ENCODE measurements at regions of chr1 and their contacts with region 1.

Region 1: GRCh38 chr1:203273206-203273868 is 32.0 kb upstream of the BTG2 start:
- DNase-seq: peak; percentile 95
- ATAC-seq: peak; percentile 78
- H3K4me3 ChIP-seq: peak overlapping the region; percentile 45 to 83 (median 61)
- H3K4me3 Mint-ChIP-seq: peak overlapping the region; percentile 86
- H3K27ac ChIP-seq: peak overlapping the region; percentile 62 to 84
- H3K27ac Mint-ChIP-seq: peak overlapping the region; percentile 86
- H3K4me1 ChIP-seq: peaks cover 72 to 77% of the 10 kb centered on the region in 2 donors
- H3K4me1 Mint-ChIP-seq: peaks cover 67% of the 10 kb centered on the region
- H3K27me3 ChIP-seq: no peaks in the 10 kb centered on the region
- H3K27me3 Mint-ChIP-seq: no peaks in the 10 kb centered on the region
- CTCF ChIP-seq: peak; percentile 99

Region 2: GRCh38 chr1:203299169-203299568 is 25.8 kb after region 1 on chr1:
- CTCF ChIA-PET with region 1: interaction called, 159 read pairs
- POLR2A ChIA-PET with region 1: interaction called, 12 read pairs
- intact Hi-C with region 1: no loop called
- DNase-seq: peak; percentile 79
- ATAC-seq: peak; percentile 70
- H3K4me3 ChIP-seq: peak overlapping the region in 3 of 5 experiments; percentile 4 to 26 (median 5)
- H3K4me3 Mint-ChIP-seq: peak overlapping the region; percentile 68
- H3K27ac ChIP-seq: peak overlapping the region; percentile 76 to 87
- H3K27ac Mint-ChIP-seq: peak overlapping the region; percentile 93
- H3K4me1 ChIP-seq: peaks cover 87 to 100% of the 10 kb centered on the region in 2 donors
- H3K4me1 Mint-ChIP-seq: peaks cover 91% of the 10 kb centered on the region
- H3K27me3 ChIP-seq: no peaks in the 10 kb centered on the region
- H3K27me3 Mint-ChIP-seq: no peaks in the 10 kb centered on the region
- CTCF ChIP-seq: no peak

Region 3: DNA sequence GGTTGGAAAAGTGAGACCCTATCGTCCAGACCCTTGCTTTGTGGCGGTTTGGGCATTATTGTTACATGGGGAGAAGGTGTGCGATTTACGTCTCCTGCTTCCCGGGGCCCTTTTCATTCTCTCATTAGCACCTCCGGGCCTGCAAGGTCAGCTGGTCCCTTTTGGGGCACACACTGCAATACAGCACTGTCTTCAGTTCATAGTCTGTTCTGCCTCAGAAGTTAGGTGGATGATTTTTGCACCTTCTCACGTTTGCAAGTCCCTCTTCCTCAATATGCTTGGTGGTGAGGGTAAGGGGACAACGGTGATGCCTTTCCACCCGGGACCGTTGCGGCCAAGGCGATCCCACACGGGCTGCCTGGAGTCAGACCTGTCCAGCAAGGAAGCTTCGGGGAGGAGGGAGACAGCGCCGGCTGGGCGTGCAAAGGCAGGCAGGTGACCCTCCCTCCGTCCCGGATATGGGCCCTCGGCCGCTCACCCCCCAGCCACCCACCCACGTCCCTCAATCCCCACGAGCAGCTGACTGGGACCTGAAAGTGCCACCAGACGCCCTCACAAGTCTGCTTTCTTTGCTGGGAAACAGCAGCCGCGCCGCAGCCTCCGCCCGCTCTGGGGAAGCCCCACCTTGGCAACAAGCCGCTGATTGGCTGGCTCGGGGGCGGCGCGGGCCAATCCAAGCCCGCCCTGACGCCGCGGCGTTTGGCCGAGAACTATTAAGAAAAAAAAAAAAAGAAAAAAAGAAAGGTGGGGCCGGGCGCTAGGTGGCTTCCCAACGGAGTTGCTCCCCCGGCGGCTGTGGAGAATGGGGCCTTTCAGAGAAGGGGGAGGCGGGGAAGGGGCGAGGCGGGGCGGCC is 53.7 kb after region 1 on chr1:
- CTCF ChIA-PET with region 1: interaction called, 1,776 read pairs
- POLR2A ChIA-PET with region 1: interaction called, 178 read pairs
- intact Hi-C with region 1: loop called (anchors 1 kb)
- DNase-seq: peak; percentile 95
- ATAC-seq: peak; percentile 67
- H3K4me3 ChIP-seq: peak overlapping the region; percentile 35 to 77 (median 56)
- H3K4me3 Mint-ChIP-seq: peak overlapping the region; percentile 88
- H3K27ac ChIP-seq: peak overlapping the region; percentile 96 to 97
- H3K27ac Mint-ChIP-seq: peak overlapping the region; percentile 98
- H3K4me1 ChIP-seq: peaks cover 56 to 62% of the 10 kb centered on the region in 2 donors
- H3K4me1 Mint-ChIP-seq: peaks cover 71% of the 10 kb centered on the region
- H3K27me3 ChIP-seq: no peaks in the 10 kb centered on the region
- H3K27me3 Mint-ChIP-seq: no peaks in the 10 kb centered on the region
- CTCF ChIP-seq: no peak

Region 4: DNA sequence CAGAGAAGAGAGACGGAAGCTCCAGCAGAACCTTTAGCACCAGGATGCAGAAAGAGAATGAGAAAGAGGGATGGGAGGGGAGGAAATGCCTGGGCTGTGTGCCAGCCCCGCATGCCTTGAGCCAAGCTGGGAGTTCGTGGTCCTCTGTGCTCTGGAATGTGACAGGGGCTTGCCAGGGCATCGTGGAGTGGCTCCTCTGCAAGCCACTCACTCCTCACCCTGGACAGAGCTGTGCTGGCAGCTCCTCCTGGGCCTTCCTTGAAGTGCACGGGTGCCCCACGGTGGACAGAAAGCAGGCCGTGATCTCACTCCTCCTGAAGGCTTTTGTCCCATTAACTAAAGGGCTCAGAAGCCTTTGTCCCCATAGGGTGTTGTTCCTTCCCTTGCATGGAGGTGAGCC is 167.4 kb after region 1 on chr1:
- CTCF ChIA-PET with region 1: interaction called, 98 read pairs
- POLR2A ChIA-PET with region 1: no interaction called
- intact Hi-C with region 1: loop called (anchors 2 kb)
- DNase-seq: peak; percentile 38
- ATAC-seq: peak; percentile 39
- H3K4me3 ChIP-seq: no peak overlapping the region
- H3K4me3 Mint-ChIP-seq: no peak overlapping the region
- H3K27ac ChIP-seq: no peak overlapping the region
- H3K27ac Mint-ChIP-seq: no peak overlapping the region
- H3K4me1 ChIP-seq: no peaks in the 10 kb centered on the region
- H3K4me1 Mint-ChIP-seq: no peaks in the 10 kb centered on the region
- H3K27me3 ChIP-seq: peaks cover 0 to 15% (median 0%) of the 10 kb centered on the region in 4 experiments
- H3K27me3 Mint-ChIP-seq: peaks cover 24% of the 10 kb centered on the region
- CTCF ChIP-seq: no peak

Region 5: DNA sequence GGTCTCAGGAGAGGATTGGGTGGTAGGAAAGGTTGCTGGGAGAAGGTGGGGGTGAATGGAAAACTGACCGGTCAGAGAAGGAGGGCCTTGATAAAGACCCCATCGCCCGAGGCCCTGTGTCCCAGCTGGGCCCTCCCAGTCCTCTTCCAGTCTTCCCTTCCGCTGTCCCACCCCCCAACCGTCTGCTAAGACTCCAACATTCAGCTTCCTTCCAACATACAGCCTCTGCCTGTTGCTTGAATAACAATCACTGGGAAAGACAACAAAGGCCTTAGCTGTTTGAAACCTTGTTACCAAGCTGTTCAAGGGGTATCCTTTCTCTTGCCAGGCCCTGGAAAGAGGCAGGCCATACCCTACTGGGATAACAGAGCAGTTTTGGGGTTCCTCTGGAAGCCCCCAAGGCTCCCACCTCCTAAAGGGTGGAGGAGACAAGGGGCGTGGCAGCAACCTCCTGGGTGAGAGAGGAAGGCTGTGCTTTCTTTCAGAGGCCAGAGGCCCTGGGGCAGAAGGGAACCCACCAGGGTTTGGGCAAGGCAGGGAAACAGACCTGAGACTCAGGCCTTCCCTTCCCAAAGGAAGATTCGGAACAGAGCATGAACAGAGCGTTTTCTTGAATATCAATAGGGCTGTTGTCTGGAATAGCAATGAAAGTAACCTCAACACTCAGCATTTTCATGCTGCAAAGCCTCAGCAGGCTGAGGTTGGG is 874.2 kb after region 1 on chr1:
- CTCF ChIA-PET with region 1: no interaction called
- POLR2A ChIA-PET with region 1: no interaction called
- intact Hi-C with region 1: no loop called
- DNase-seq: no peak
- ATAC-seq: no peak
- H3K4me3 ChIP-seq: no peak overlapping the region
- H3K4me3 Mint-ChIP-seq: no peak overlapping the region
- H3K27ac ChIP-seq: no peak overlapping the region
- H3K27ac Mint-ChIP-seq: no peak overlapping the region
- H3K4me1 ChIP-seq: peaks cover 9 to 12% of the 10 kb centered on the region in 2 donors
- H3K4me1 Mint-ChIP-seq: peaks cover 5% of the 10 kb centered on the region
- H3K27me3 ChIP-seq: peaks cover 0 to 14% (median 5%) of the 10 kb centered on the region in 4 experiments
- H3K27me3 Mint-ChIP-seq: peaks cover 18% of the 10 kb centered on the region
- CTCF ChIP-seq: no peak